ENCODE measurements at regions of chr14 and their contacts with region 1.

Region 1: DNA sequence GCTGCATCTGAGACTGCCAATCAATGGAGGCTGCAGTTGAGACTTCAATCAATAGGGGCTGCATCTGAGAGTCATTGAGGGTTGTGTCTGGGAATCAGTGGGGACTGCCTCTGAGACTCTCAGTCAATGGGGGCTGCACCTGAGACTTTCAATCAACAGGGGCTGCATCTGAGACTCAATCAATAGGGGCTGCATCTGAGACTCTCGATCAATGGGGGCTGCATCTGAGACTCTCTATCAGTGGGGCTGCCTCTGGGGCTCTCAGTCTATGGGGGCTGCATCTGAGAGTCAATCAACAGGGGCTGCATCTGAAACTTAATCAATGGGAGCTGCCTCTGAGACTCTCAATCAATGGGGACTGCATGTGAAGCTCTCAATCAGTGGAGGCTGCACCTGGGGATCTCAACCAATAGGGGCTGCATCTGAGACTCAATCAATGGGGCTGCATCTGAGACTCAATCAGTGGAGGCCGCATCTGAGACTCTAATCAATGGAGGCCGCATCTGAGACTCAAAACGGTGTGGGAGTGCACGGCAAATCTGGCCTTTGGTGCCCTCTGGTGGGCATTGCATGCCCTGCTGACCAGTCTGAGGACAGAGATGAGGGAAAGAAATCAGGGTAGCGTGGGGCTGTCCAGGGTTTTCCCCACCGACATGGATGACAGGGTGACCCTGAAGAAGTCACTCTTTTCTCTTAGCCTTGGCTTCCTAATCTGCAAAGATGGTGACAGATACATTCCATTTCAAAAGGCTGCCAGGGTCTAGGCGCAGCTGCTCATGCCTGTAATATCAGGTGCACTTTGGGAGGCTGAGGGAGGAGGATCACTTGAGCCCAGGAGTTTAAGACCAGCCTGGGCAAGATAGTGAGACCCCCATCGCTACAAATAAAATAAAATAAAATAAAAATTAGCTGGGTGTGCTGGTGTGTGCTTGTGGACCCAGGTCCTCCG is 41.3 kb upstream of the EIF5 start:
- DNase-seq: peak; percentile 87
- ATAC-seq: peak; percentile 98
- H3K4me3 Mint-ChIP-seq: no peak overlapping the region
- H3K27ac Mint-ChIP-seq: no peak overlapping the region
- H3K4me1 Mint-ChIP-seq: no peaks in the 10 kb centered on the region
- H3K27me3 Mint-ChIP-seq: peaks cover 7% of the 10 kb centered on the region
- CTCF ChIP-seq: peak; percentile 82

Region 2: DNA sequence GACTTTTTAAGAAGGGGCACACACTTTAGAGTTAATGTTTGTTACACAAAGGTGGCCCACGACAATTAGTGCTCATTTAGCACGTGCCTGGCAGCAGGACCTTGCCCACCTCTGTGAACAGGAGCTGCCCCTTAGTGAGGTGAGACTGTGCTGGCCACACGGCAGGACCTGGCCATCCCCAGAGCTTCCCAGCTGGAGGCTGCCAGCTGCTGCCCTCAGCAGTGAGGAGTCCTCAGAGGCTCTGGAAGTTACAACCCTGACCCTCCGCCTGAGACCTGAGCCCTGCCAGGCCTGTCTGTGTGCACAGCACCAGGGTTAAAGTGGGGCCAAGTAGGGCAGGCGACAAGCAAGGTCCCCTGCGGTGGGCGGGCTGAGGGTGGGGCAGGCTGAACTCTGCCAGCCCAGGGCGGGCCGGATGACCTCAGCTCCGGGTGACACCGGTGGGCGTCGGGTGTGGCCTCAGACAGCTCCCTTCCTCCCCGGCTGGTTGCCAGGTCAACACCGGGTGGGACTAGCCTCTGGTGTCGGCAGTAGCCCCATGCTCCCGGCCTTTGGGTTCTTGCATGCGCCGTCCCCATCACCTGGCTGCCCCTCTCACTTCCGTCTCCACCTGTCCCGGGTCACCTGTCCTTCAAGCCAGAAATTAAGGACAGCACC is 217.9 kb before region 1 on chr14:
- CTCF ChIA-PET with region 1: interaction called, 10 read pairs
- POLR2A ChIA-PET with region 1: no interaction called
- intact Hi-C with region 1: no loop called
- DNase-seq: peak; percentile 68
- ATAC-seq: peak; percentile 21
- H3K4me3 Mint-ChIP-seq: no peak overlapping the region
- H3K27ac Mint-ChIP-seq: no peak overlapping the region
- H3K4me1 Mint-ChIP-seq: no peaks in the 10 kb centered on the region
- H3K27me3 Mint-ChIP-seq: peaks cover 4% of the 10 kb centered on the region
- CTCF ChIP-seq: no peak

Region 3: DNA sequence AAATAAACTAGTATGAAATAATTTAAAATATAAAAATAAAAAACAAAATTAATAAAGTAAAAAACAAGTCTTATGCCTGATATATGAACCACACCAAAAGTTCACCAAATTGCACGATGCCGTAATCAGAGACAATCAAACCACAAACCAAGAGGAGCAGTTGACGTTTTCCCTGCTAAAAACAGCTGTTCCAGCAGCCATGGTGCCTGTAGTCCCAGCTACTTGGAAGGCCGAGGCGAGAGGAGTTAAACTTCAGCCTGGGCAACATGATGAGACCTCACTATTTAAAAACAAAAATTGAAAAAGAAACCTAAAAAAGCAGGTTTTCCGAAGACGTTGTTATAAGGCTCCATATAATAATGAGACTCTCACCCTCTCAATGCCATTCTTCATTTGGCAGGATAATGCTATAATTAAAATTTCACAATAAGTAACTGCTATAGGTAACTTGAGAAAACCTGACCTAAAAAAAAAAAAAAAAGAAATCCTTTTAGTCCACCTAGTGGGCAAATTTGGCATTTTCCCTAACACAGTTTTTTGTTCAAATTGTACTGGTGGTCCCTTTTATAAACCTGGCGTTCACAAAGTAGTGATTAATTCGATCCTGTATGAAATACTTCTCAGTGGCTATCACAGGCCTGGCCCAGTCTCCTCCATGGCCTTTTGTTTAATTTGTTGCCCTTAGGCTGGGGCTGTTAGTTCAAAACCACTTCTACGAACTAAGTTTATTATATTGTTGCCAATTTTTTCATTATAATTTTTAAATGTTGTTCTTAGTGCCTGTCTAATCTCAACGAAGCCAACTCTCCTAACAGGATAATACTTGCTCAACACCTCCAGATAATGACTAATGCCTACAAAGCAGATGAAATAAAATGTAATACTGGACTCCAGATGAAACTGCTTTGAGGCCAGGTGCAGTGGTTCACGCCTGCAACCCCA is 107.4 kb before region 1 on chr14:
- CTCF ChIA-PET with region 1: interaction called, 3 read pairs
- POLR2A ChIA-PET with region 1: no interaction called
- intact Hi-C with region 1: loop called (anchors 10 kb)
- DNase-seq: no peak
- ATAC-seq: no peak
- H3K4me3 Mint-ChIP-seq: no peak overlapping the region
- H3K27ac Mint-ChIP-seq: no peak overlapping the region
- H3K4me1 Mint-ChIP-seq: peaks cover 8% of the 10 kb centered on the region
- H3K27me3 Mint-ChIP-seq: peaks cover 34% of the 10 kb centered on the region
- CTCF ChIP-seq: peak; percentile 82

Region 4: DNA sequence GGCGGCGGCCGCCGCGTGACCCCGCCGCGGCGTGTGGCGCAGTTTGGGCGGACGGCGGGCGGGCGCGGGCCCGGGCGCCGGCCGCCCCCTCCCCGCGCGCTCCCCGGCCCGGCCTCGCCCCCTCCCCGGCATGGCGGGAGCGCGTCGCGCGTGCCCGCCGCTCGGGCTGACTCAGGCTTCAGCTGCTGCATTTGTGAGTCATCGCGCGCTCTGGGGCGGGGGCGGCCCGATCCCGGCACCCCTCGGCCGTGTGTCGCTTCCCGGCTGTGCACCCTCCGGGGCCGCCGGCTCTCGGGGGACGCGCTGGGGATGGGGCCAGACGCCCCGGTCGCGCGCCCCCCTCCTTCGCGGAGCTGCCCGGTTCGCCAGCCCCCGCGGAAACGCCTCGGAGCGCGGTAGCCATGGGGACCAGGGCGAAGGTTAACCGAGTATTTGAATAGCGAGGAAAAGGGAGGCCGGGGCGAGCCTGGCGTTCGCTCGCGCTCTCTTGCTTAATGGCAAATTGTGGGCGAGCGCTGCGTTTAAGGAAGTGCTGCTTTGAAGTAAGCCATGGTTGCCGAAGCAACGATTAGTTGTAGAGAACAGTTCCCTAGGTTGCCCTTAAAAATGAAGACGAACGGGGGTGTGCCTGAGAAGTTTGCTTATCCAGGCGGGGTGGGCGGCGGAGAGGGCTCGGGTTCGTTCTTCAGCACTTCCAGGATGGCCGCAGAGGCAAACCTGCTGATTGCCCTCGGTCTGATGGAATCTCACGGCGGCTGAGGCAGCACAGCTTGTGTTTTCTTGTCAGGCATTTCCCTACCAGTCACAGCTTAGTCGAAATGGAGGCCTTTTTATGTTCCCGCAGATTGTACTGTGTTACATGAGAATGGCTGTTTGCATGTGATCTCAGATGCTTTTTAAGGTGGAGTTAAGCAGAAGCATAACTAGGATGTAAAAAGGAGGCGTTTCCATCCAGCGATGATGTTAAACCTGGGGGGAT is 42.2 kb after region 1 on chr14:
- CTCF ChIA-PET with region 1: no interaction called
- POLR2A ChIA-PET with region 1: no interaction called
- intact Hi-C with region 1: no loop called
- DNase-seq: peak; percentile 90
- ATAC-seq: peak; percentile 38
- H3K4me3 Mint-ChIP-seq: peak overlapping the region; percentile 87
- H3K27ac Mint-ChIP-seq: peak overlapping the region; percentile 92
- H3K4me1 Mint-ChIP-seq: peaks cover 64% of the 10 kb centered on the region
- H3K27me3 Mint-ChIP-seq: no peaks in the 10 kb centered on the region
- CTCF ChIP-seq: no peak

Measured in activated CD8-positive, alpha-beta T cell treated with anti-CD3 and anti-CD28 coated beads for 36 hours (primary cell).